ENCODE measurements at regions of chr11 and their contacts with region 1.

Region 1: DNA sequence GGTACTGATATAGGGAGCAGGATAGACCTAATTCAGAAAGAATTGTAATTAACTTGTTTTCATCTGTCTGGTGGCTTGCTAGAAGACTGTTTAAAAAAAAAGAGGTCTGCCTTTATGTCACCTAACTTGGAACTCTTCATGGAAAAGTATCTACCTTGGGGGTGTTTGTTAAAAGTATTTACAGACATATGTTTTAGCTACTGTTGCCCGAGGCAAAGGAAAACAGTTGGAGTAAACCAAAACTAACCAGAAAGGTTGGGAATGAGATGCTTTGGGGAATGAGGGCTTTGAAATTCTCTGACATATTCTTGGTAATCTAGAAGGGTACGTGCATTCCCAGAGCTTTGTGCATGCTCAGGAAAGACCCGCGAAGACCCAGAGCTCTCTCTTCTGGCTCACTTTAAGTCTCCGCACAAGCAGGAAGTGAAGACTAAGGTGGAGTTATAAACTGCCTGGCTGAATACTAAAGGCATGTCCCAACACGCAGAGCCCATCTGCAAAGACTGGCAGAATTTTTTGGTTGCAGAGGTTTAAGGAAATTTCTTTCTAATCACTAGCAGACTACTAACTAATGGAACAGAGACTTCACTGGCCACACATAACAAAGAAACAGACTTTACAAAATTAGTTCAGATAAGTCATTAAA is 33.2 kb downstream of the HIKESHI start:
- DNase-seq: no peak
- ATAC-seq: no peak

Region 2: GRCh38 chr11:86244522-86245368 is 90.5 kb before region 1 on chr11 and contains the start of gene EED:
- intact Hi-C with region 1: no loop called
- DNase-seq: peak; percentile 97
- ATAC-seq: peak; percentile 97
- total RNA-seq, gene EED: 14.5 TPM

Region 3: DNA sequence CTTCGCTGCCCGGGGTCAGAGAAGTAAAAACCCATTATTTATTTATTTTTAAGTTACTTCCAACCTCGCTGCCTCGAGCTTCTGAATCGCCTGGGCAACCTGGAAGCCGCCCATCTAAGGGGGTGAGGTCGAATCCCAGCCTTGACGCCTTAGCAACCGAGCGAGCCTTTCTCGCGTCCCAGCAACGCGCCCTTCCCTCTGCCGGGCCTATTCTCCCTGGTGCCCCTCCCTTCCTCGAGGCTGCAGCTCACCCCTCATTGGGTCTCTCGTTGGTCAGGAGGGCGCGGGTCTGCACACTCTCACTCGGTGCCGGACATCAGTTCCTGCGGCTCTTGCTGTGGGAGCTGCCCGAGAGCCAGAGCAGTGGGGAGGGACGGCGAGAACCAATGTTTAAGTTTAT is 39.3 kb after region 1 on chr11 and contains the start of gene CCDC81:
- intact Hi-C with region 1: no loop called
- DNase-seq: no peak
- ATAC-seq: no peak
- total RNA-seq, gene CCDC81: 0.25 TPM

Region 4: GRCh38 chr11:86438685-86439084 is 103.4 kb after region 1 on chr11:
- intact Hi-C with region 1: loop called (anchors 10 kb)
- DNase-seq: no peak
- ATAC-seq: no peak